Activated CD4-positive, alpha-beta memory T cell treated with anti-CD3 and anti-CD28 coated beads, Interleukin-2, amount 10 ng/mL, durations not matched to agents 7 days and 5 days (primary cell): ENCODE measurements at regions of chr3 and their contacts with region 1.

Region 1: GRCh38 chr3:112642912-112643506 is 2.1 kb upstream of the CCDC80 start:
- DNase-seq: peak; percentile 88
- H3K4me3 Mint-ChIP-seq: peak overlapping the region; percentile 49
- H3K27ac Mint-ChIP-seq: peak overlapping the region; percentile 62
- H3K4me1 Mint-ChIP-seq: peaks cover 30% of the 10 kb centered on the region
- H3K27me3 Mint-ChIP-seq: peaks cover 5% of the 10 kb centered on the region

Region 2: DNA sequence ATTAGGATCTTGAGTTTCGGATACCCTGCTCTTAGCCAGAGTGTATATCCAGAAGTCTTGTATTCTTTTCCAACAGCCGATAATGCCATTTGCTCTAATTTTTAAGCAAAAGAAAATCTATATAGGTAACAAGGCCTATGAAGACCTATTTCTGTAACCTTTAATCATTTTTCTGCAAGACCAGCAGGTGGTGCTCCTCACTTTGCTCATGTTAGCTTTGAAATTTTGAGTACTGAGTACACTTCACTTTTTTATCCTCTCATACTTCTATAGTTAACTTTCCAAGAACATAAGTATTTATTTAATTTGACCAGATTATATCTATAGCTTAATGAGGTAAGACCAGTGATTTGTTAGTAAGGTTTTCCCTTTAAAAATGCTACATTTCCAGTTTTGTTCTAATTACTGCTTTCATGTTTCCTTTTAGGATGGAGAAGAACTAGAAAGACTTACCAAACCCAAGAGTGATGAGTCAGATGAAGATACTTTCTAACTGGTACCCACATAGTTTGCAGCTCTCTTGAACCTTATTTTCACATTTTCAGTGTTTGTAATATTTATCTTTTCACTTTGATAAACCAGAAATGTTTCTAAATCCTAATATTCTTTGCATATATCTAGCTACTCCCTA is 60.6 kb before region 1 on chr3:
- CTCF ChIA-PET with region 1: interaction called, 11 read pairs
- POLR2A ChIA-PET with region 1: interaction called, 4 read pairs
- DNase-seq: peak; percentile 51
- H3K4me3 Mint-ChIP-seq: no peak overlapping the region
- H3K27ac Mint-ChIP-seq: no peak overlapping the region
- H3K4me1 Mint-ChIP-seq: peaks cover 11% of the 10 kb centered on the region
- H3K27me3 Mint-ChIP-seq: no peaks in the 10 kb centered on the region

Region 3: DNA sequence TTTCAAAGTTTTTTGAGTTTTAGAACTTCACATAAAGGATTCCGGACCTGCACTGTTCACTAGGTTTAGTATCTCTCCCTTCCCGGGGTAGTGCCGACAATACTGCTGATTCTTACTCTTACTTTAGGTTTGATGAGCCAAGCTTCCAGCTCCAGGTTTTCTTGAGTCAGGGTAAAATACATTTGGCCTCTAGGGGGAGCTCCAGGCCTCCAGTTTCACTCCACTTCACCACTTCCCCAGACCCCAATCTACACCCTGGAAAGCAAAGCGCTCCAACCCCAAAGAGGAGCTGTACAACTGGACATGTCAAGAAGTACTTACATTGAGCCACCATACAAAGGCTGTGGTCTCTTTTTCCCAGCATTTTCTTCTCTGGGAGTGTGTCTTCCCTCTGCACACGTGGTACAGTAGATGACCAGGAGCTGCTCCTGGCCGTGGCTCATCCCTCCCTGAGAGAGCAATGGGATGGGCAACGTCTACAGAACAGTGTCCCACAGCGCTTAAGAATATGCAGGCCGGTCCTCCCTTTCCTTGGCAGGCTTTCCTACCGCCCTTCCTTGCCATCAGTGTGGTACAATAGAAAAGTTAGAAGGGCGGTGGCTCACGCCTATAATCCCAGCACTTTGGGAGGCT is 91.8 kb after region 1 on chr3:
- CTCF ChIA-PET with region 1: interaction called, 71 read pairs
- POLR2A ChIA-PET with region 1: interaction called, 10 read pairs
- DNase-seq: peak; percentile 71
- H3K4me3 Mint-ChIP-seq: no peak overlapping the region
- H3K27ac Mint-ChIP-seq: no peak overlapping the region
- H3K4me1 Mint-ChIP-seq: peaks cover 48% of the 10 kb centered on the region
- H3K27me3 Mint-ChIP-seq: no peaks in the 10 kb centered on the region

Region 4: GRCh38 chr3:112973325-112974177 is 330.5 kb after region 1 on chr3:
- CTCF ChIA-PET with region 1: interaction called, 47 read pairs
- POLR2A ChIA-PET with region 1: interaction called, 9 read pairs
- DNase-seq: peak; percentile 44
- H3K4me3 Mint-ChIP-seq: peak overlapping the region; percentile 97
- H3K27ac Mint-ChIP-seq: peak overlapping the region; percentile 83
- H3K4me1 Mint-ChIP-seq: peaks cover 76% of the 10 kb centered on the region
- H3K27me3 Mint-ChIP-seq: peaks cover 2% of the 10 kb centered on the region

Region 5: GRCh38 chr3:112984485-112984884 is 341.5 kb after region 1 on chr3:
- CTCF ChIA-PET with region 1: interaction called, 47 read pairs
- POLR2A ChIA-PET with region 1: no interaction called
- DNase-seq: peak; percentile 27
- H3K4me3 Mint-ChIP-seq: no peak overlapping the region
- H3K27ac Mint-ChIP-seq: peak overlapping the region; percentile 21
- H3K4me1 Mint-ChIP-seq: peaks cover 51% of the 10 kb centered on the region
- H3K27me3 Mint-ChIP-seq: peaks cover 1% of the 10 kb centered on the region

Region 6: GRCh38 chr3:113035387-113035982 is 392.5 kb after region 1 on chr3:
- CTCF ChIA-PET with region 1: interaction called, 17 read pairs
- POLR2A ChIA-PET with region 1: no interaction called
- DNase-seq: peak; percentile 32
- H3K4me3 Mint-ChIP-seq: no peak overlapping the region
- H3K27ac Mint-ChIP-seq: no peak overlapping the region
- H3K4me1 Mint-ChIP-seq: no peaks in the 10 kb centered on the region
- H3K27me3 Mint-ChIP-seq: no peaks in the 10 kb centered on the region